GM18951 (cell line): ENCODE measurements at regions of chr7 and their contacts with region 1.

Region 1: GRCh38 chr7:45136106-45137060 is 21.2 kb upstream of the RAMP3 start:
- POLR2A ChIP-seq: no peak

Region 2: GRCh38 chr7:44581879-44582603 is 554.3 kb before region 1 on chr7 and contains the start of gene TMED4:
- in situ Hi-C with region 1: loop called (anchors 25 kb)
- POLR2A ChIP-seq: peak; percentile 98

Region 3: DNA sequence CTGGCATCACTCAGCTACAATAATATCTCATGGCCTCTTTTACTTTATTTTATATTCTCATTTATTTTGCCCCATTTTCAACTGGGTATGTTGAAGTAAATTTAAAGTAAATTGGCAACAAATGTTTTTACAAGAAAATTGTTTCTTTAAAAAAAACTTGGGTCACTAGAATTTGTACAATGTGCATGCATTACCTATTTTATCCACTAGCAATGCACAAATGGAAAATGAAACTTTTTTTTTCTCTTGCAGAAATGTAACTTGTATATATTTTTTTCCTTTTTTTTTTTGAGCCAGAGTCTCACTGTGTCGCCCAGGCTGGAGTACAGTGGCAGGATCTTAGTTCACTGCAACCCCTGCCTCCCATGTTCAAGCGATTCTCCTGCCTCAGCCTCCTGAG is 278.2 kb before region 1 on chr7:
- in situ Hi-C with region 1: loop called (anchors 10 kb)
- POLR2A ChIP-seq: no peak

Region 4: GRCh38 chr7:45689011-45689796 is 552.8 kb after region 1 on chr7:
- in situ Hi-C with region 1: no loop called
- POLR2A ChIP-seq: no peak